Activated CD4-positive, alpha-beta memory T cell treated with anti-CD3 and anti-CD28 coated beads, Interleukin-2, amount 10 ng/mL, durations not matched to agents 7 days and 5 days (primary cell): ENCODE measurements at regions of chr5 and their contacts with region 1.

Region 1: DNA sequence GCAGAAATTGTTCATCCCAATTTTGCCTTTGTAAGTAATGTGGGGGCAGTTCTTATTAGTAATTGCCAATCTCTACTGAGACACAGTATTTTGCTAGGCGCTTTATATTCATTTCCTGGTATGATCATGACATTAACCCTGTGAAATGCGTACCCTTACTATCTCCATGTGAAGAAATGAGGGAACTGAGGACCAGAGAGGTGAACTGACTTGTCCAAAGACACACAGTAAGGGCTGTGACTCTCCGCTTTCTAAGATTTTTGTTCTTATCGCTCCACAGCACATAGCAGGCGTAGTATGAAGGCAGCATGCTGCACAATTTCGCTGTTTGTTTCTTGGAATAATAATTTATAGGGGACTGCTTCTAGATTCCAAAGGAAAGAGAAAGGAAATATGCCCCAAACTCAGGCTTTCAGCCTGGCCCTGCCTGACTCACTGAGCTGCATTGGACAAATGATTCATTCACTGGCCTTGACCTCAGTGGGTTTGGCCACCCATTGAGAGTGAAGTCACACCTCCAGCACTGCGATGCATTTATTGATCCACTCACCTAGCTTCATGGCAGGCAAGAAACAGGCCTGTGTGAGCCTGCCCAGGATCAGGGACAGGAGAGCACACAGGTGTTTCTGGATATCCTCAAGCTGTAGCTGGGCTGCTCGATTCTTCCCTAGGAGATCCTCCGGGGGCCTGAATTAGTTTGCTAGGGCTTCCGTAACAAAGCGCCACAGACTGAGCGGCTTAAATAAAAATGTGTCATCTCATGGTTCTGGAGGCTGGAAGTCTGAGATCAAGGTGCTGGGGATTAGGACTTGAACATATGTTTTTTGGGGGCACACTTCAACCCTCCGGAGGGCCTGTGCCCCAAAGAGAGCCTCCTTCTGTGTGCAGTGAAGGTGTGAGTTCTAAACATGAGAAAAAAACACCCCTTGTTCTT is 7.2 kb upstream of the DUSP1 start:
- DNase-seq: no peak
- H3K4me3 Mint-ChIP-seq: peak overlapping the region; percentile 36
- H3K27ac Mint-ChIP-seq: peak overlapping the region; percentile 79
- H3K4me1 Mint-ChIP-seq: peaks cover 42% of the 10 kb centered on the region
- H3K27me3 Mint-ChIP-seq: no peaks in the 10 kb centered on the region

Region 2: DNA sequence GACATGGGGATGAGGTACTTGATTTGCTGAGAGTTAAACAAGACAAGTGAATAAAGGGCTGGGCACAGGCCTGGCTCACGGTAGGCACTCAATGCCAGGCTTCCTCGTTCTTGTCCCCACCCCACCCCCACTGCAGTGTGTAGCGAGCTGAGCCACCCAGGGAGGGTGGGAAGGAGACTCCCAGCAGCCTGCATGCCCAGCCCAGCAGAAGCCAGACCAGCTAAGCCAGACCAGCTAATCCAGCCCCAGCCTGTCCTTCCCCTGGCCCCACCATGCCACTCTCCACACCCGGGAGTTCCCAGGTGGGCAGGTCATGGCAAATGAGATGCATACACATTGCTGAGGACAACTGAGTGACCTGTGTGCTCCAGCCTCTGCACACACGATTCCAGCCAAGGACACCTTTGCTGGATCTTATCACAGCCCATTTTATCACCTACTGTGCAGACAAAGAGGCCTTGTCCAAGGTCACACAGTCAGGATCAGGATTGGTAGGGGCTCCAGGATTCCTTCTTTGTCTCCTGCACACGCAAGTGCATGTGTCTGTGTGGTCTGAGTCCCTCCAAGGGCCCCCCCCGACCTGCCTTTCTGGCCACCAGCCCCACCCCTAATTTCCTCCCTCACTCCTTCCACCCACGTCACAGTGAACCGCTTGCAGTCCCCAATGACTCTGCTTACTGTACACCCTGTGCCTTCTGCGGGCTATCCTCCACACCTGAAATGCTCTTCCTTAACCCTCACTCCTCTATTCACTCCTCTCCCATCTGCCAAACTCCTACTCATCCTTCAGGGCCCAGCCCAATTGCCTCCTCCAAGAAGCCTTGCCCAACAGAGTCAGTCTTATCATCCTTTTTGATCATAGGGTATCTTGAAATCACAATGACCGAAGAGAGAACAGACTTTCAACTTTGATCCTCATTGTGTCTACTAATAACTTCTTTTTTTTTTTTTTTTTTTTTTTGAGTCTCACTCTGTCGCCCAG is 33.7 kb before region 1 on chr5:
- CTCF ChIA-PET with region 1: no interaction called
- POLR2A ChIA-PET with region 1: no interaction called
- DNase-seq: no peak
- H3K4me3 Mint-ChIP-seq: no peak overlapping the region
- H3K27ac Mint-ChIP-seq: no peak overlapping the region
- H3K4me1 Mint-ChIP-seq: no peaks in the 10 kb centered on the region
- H3K27me3 Mint-ChIP-seq: peaks cover 2% of the 10 kb centered on the region

Region 3: GRCh38 chr5:172764849-172765765 is 13.0 kb before region 1 on chr5:
- CTCF ChIA-PET with region 1: interaction called, 13 read pairs
- POLR2A ChIA-PET with region 1: interaction called, 20 read pairs
- DNase-seq: peak; percentile 96
- H3K4me3 Mint-ChIP-seq: peak overlapping the region; percentile 73
- H3K27ac Mint-ChIP-seq: peak overlapping the region; percentile 82
- H3K4me1 Mint-ChIP-seq: peaks cover 41% of the 10 kb centered on the region
- H3K27me3 Mint-ChIP-seq: peaks cover 6% of the 10 kb centered on the region

Region 4: DNA sequence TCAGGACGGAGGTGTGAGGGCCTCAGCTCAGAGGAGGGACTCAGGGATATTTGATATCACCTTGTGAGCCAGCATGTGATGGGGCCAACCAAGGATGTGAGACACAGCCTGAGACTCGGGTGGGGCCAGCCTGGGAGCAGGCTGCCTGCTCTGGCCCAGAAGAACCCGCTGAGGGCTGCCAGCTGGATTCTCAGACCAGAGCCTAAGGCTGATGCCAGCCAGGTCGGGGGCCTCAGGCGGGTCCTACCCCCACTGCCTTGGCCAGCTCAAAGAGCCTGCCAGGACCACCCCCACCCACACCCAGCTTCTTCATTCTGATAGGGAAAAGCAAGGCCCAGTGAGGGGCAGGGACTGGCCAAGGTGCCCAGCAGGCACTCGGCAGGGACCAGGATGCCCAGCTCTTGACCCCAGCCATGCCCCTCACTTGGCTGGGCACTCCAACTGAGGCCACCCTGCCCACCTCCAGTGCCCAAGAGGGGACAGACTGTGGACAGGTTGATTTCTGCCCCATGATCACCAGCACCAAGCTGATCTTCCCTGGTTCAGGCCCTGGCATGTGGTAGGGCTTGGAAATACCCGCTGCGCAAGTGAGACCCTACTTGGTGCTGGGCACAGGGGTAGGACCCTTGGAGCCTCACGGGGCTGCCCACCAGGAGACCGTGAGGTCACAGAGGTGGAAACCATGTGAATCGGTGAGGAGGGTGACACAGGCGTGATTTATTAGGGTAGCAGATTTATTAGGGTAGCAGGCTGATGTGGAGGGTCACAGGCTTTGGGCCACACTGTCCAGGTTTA is 13.3 kb after region 1 on chr5:
- CTCF ChIA-PET with region 1: no interaction called
- POLR2A ChIA-PET with region 1: no interaction called
- DNase-seq: no peak
- H3K4me3 Mint-ChIP-seq: no peak overlapping the region
- H3K27ac Mint-ChIP-seq: no peak overlapping the region
- H3K4me1 Mint-ChIP-seq: no peaks in the 10 kb centered on the region
- H3K27me3 Mint-ChIP-seq: no peaks in the 10 kb centered on the region

Region 5: DNA sequence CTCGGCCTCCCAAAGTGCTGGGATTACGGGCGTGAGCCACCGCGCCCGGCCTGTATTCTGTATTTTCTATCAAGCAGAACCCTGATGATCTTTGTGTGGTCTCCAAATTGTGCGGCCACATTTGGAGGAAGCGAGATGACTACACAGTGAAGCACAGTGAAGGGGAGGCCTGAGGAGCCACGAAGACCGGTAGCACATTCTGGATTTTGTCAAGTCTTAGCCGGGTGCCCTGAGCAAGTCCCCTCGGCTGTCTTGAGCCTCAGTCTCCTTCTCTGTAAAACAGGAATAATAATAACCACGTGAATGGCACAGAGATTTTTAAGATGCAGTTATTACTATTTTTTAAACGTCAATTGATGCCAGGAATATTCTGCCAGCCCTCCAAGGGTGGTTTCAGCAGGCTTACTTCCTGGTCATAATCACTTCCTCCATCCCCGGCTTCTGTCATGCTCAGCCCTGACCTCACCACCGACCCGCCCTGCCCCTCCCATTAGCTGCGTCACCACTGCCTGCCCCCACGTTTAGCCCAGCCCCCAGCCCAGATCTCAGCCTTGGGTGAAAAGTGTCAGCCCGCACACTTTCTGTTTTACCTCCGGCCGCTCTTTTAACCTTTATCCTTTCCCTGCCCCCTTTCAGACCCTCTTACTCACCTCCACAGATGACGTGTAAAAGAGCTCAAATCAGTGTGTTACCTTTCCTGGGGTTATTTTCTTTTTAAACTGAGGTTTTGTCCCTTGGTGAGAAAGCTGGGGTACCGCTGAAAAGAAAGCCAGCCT is 28.9 kb after region 1 on chr5:
- CTCF ChIA-PET with region 1: interaction called, 7 read pairs
- POLR2A ChIA-PET with region 1: interaction called, 18 read pairs
- DNase-seq: peak; percentile 92
- H3K4me3 Mint-ChIP-seq: peak overlapping the region; percentile 70
- H3K27ac Mint-ChIP-seq: peak overlapping the region; percentile 74
- H3K4me1 Mint-ChIP-seq: peaks cover 16% of the 10 kb centered on the region
- H3K27me3 Mint-ChIP-seq: peaks cover 2% of the 10 kb centered on the region